Activated B cell treated with CpG ODN at 0.5 μM for 24 hours (primary cell): ENCODE measurements at regions of chr16 and their contacts with region 1.

Region 1: DNA sequence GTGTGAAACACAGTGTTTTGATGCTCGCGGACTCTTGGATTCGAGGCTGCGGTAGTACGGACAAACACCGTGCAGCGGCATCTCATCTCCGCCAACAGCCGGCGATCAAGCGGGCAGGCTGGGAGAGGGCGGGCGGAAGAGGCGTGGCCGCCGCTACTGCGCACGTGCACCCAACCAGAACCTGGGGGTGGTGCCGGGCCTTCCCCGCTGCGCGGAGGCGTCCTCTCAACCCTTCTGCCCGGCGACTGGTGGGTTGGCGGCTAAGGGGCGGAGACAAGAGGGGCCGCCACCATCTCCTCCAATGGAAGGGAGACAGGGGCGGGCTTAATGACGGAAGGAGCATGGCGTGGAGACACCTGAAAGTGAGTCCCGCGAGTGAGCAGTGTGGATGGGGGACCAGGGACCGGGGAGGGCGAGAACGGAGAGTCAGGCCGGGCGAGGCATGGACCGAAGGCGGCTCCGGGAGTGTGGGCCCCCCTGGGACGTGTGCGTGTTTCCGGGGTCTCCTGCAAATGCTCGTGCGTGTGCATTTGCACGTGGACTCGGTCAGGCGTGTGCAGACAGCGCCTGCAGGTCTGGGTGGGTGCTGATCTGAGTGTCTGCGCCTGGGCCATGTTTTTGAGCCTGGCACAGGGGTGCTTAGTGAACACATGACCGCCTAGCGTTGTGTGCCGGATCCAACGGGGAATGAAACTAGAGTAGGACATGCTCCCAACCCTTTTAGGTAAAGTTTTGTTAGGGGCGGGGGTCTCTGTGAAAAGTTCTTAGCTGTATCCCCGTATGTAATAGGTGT is at the start of gene DHODH:
- DNase-seq: peak; percentile 92
- ATAC-seq: peak; percentile 98
- H3K4me3 Mint-ChIP-seq: peak within 1 kb of the TSS; percentile 91
- H3K27ac Mint-ChIP-seq: peak within 1 kb of the TSS; percentile 91
- H3K4me1 Mint-ChIP-seq: peaks cover 18% of the 10 kb centered on the region
- H3K27me3 Mint-ChIP-seq: peaks cover 2% of the 10 kb centered on the region
- CTCF ChIP-seq: no peak
- total RNA-seq, gene DHODH: 12.0 and 13.0 TPM in 2 replicates

Region 2: GRCh38 chr16:71461686-71462648 is 546.7 kb before region 1 on chr16 and contains the start of gene ZNF23:
- CTCF ChIA-PET with region 1: no interaction called
- POLR2A ChIA-PET with region 1: no interaction called
- intact Hi-C with region 1: loop called (anchors 10 kb)
- DNase-seq: peak; percentile 90
- ATAC-seq: peak; percentile 97
- H3K4me3 Mint-ChIP-seq: peak within 1 kb of the TSS; percentile 93
- H3K27ac Mint-ChIP-seq: peak within 1 kb of the TSS; percentile 94
- H3K4me1 Mint-ChIP-seq: peaks cover 22% of the 10 kb centered on the region
- H3K27me3 Mint-ChIP-seq: no peaks in the 10 kb centered on the region
- CTCF ChIP-seq: no peak
- total RNA-seq, gene ZNF23: 13.3 and 14.6 TPM in 2 replicates

Region 3: GRCh38 chr16:71808593-71809459 is 199.8 kb before region 1 on chr16 and contains the start of gene AP1G1:
- CTCF ChIA-PET with region 1: no interaction called
- POLR2A ChIA-PET with region 1: no interaction called
- intact Hi-C with region 1: loop called (anchors 1 kb)
- DNase-seq: peak; percentile 79
- ATAC-seq: peak; percentile 86
- H3K4me3 Mint-ChIP-seq: peak within 1 kb of the TSS; percentile 98
- H3K27ac Mint-ChIP-seq: peak within 1 kb of the TSS; percentile 100
- H3K4me1 Mint-ChIP-seq: peaks cover 35% of the 10 kb centered on the region
- H3K27me3 Mint-ChIP-seq: no peaks in the 10 kb centered on the region
- CTCF ChIP-seq: no peak
- total RNA-seq, gene AP1G1: 112 and 120 TPM in 2 replicates

Region 4: DNA sequence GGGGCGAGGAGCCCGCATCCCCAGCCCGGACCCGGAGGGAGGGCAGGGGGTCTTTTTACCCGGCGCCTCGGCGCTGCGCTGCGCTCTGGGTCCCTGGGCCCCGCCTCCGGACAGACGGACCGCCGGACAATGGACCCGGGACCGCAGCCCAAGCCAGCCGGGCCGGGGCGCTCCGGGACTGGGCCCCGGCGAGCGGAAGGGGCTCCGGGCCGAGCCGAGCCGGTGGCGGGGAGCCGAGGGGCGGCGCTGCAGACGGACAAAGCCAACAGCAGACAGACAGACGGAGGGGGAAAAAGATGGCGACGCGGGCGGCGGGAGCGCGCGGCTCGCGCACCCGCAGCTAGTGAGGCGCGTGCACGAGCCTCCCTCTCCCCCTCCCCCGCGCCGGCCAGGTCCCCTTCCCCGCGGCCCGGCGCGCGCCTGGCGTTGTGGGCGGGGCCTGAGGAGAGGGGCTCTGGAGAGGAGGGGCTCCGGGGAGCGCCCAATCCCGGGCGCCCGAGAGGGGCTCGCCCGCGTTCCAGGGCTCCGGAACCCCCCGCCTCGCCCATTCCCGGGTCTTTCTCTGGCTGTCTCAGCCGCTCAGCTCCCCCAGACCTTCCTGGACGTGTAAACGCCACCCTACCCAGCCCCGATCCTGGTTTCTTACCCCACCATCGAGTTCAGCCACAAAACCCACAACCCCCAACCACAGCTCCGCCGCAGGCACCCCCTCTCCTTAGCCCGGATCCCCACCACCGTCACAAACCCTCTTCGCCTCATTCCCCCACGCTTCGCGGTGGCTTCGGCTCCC is 124.6 kb before region 1 on chr16 and contains the start of gene ZNF821:
- CTCF ChIA-PET with region 1: no interaction called
- POLR2A ChIA-PET with region 1: no interaction called
- intact Hi-C with region 1: loop called (anchors 1 kb)
- DNase-seq: peak; percentile 81
- ATAC-seq: peak; percentile 75
- H3K4me3 Mint-ChIP-seq: peak within 1 kb of the TSS; percentile 98
- H3K27ac Mint-ChIP-seq: peak within 1 kb of the TSS; percentile 94
- H3K4me1 Mint-ChIP-seq: peaks cover 52% of the 10 kb centered on the region
- H3K27me3 Mint-ChIP-seq: no peaks in the 10 kb centered on the region
- CTCF ChIP-seq: no peak
- total RNA-seq, gene ZNF821: 10.6 and 13.6 TPM in 2 replicates

Region 5: DNA sequence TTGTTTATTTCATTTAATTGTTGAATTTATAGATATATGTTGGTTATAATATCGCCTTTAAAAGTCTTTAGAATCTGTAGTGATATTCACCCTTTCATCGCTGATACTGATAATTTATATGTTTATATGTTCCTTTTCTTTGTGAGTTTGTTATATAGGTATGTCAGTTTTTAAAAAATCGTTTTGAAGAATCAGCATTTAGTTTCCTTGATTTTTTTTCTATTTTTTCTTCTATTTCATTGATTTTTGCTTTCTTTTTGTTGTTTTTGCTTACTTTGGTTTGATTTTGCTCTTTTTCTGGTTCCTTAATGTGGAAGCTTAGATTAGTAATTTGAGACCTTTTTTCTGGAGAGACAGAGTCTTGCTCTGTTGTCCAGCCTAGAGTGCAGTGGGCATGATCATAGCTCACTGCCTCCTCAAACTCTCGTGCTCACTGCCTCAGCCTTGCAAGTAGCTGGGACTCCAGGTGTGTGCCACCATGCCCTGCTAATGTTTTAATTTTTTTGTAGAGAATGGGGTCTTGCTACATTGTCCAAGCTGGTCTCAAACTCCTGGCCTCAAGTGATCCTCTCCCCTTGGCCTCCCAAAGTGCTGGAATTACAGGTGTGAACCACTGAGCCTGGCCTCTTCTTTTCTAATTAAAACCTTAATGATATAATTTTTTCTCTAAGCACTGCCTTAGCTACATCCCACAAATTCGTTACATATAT is 105.8 kb before region 1 on chr16:
- CTCF ChIA-PET with region 1: no interaction called
- POLR2A ChIA-PET with region 1: no interaction called
- intact Hi-C with region 1: no loop called
- DNase-seq: no peak
- ATAC-seq: no peak
- H3K4me3 Mint-ChIP-seq: no peak overlapping the region
- H3K27ac Mint-ChIP-seq: peak overlapping the region; percentile 12
- H3K4me1 Mint-ChIP-seq: peaks cover 72% of the 10 kb centered on the region
- H3K27me3 Mint-ChIP-seq: no peaks in the 10 kb centered on the region
- CTCF ChIP-seq: no peak

Region 6: DNA sequence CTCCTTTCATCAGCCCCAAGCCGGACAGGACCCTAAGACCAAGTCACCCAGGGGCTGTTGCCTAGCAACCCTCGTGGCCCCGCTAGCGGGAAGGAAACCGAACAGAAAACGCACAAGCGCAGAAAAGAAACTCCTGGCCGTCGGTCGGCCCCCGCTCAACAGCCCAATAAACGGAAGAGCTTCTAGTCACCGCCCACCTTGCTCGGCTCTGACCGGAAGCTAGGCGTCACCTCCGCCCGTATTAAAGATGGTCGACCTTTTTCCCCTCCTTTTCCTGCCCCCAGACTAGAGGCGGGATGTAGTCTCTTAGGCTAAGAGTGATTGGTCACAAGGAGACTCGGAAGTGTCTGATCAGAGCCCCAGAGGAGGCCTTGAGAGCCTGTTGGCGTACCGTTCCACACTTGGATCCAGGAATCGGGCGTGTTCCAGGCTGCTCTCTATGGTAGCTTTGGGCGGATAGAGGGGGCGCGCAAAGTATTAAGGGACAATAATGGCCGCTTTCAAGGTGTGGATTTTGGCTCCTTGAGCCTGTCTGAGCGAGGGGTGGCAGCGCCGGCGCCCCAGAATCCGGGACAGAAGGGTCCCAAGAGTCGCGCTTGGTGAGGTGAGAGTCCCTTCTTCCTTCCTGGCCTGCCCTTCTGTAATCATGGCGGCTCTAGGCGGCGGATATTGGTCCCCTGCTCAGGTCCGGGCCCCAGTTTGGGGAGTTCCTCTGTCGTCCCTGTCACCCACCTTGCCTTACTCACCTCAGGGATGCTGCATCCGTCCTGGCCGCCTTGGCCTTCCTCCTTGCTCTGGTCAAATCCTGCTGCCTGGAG is 85.0 kb after region 1 on chr16 and contains the starts of genes DHX38 and TXNL4B:
- CTCF ChIA-PET with region 1: no interaction called
- POLR2A ChIA-PET with region 1: interaction called, 3 read pairs
- intact Hi-C with region 1: loop called (anchors 1 kb)
- DNase-seq: peak; percentile 77
- ATAC-seq: peak; percentile 96
- H3K4me3 Mint-ChIP-seq: peak within 1 kb of the TSS; percentile 99
- H3K27ac Mint-ChIP-seq: peak within 1 kb of the TSS; percentile 96
- H3K4me1 Mint-ChIP-seq: peaks cover 47% of the 10 kb centered on the region
- H3K27me3 Mint-ChIP-seq: no peaks in the 10 kb centered on the region
- CTCF ChIP-seq: no peak
- total RNA-seq, gene DHX38: 107 and 118 TPM in 2 replicates
- total RNA-seq, gene TXNL4B: 13.1 and 13.8 TPM in 2 replicates

Region 7: GRCh38 chr16:72664509-72665225 is 656.0 kb after region 1 on chr16:
- CTCF ChIA-PET with region 1: no interaction called
- POLR2A ChIA-PET with region 1: no interaction called
- intact Hi-C with region 1: loop called (anchors 2 kb)
- DNase-seq: peak; percentile 85
- ATAC-seq: peak; percentile 99
- H3K4me3 Mint-ChIP-seq: peak overlapping the region; percentile 98
- H3K27ac Mint-ChIP-seq: peak overlapping the region; percentile 95
- H3K4me1 Mint-ChIP-seq: peaks cover 20% of the 10 kb centered on the region
- H3K27me3 Mint-ChIP-seq: no peaks in the 10 kb centered on the region
- CTCF ChIP-seq: no peak